HEK293 (cell line): ENCODE measurements at regions of chr17 and their contacts with region 1.

Region 1: DNA sequence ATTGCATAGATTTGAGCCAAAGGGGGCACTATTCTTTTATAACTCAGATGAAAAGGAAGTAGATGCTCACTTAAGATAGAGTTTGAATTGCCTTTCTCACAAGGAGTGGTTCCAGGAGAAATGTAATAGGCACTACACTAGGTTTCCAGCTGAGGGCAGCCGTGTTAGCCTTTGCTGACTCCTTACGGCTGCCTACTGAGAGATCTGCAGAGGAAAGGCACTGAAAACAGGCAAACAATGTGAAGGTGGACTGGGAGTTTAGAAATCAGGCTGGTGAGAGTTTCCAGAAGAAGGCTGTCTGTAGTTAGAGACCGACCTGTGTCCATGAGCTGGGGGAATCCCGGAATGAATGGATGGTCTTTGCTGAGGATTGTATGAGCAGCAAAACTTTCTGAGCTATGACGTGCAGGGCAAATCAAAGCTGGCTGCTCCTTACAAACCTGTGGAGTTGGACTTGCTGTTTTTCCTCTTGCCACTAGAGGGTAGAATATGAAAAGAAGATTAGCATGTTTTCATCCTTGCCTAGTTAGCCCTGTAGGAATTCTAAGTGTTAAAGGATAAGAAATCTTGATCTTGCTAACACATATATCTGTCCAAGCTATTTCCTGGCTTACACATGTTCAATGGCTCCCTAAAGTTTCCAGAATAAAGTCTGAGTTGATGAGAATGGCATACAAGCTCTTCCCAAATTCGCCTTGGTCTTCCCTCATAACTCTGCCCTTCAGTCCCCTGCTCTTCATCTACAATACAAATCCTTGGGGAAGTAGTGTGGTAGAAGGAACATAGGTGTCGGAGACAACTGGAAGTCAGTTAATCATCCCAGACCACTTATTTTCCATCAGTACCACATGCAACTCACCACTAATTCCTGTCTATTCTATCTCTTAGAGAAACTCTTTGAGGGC is 20.1 kb upstream of the TAOK1 start:
- H3K4me3 ChIP-seq: peak overlapping the region; percentile 21
- H3K27ac ChIP-seq: 0 out of 2 replicates have a peak overlapping the region, but pooled peaks have one; percentile 4
- H3K4me1 ChIP-seq: no peaks in the 10 kb centered on the region
- CTCF ChIP-seq: peak; percentile 75; the same call in 1 of the 2 replicates

Region 2: GRCh38 chr17:29293890-29294579 is 76.0 kb before region 1 on chr17 and contains the start of gene NUFIP2:
- CTCF ChIA-PET with region 1: interaction called, 11 read pairs
- POLR2A ChIA-PET with region 1: interaction called, 17 read pairs
- H3K4me3 ChIP-seq: peak within 1 kb of the TSS; percentile 86
- H3K27ac ChIP-seq: peak within 1 kb of the TSS; percentile 99
- H3K4me1 ChIP-seq: peaks cover 11% of the 10 kb centered on the region
- CTCF ChIP-seq: no peak; the same call in 1 of the 2 replicates

Region 3: GRCh38 chr17:29384900-29385299 is 14.8 kb after region 1 on chr17:
- CTCF ChIA-PET with region 1: interaction called, 48 read pairs
- POLR2A ChIA-PET with region 1: interaction called, 9 read pairs
- H3K4me3 ChIP-seq: no peak overlapping the region
- H3K27ac ChIP-seq: no peak overlapping the region
- H3K4me1 ChIP-seq: no peaks in the 10 kb centered on the region
- CTCF ChIP-seq: no peak

Region 4: GRCh38 chr17:29524460-29525091 is 154.5 kb after region 1 on chr17:
- CTCF ChIA-PET with region 1: interaction called, 14 read pairs
- POLR2A ChIA-PET with region 1: no interaction called
- H3K4me3 ChIP-seq: no peak overlapping the region
- H3K27ac ChIP-seq: no peak overlapping the region
- H3K4me1 ChIP-seq: 0 out of 2 replicates have a peak, but pooled peaks cover 2% of the 10 kb centered on the region
- CTCF ChIP-seq: no peak

Region 5: DNA sequence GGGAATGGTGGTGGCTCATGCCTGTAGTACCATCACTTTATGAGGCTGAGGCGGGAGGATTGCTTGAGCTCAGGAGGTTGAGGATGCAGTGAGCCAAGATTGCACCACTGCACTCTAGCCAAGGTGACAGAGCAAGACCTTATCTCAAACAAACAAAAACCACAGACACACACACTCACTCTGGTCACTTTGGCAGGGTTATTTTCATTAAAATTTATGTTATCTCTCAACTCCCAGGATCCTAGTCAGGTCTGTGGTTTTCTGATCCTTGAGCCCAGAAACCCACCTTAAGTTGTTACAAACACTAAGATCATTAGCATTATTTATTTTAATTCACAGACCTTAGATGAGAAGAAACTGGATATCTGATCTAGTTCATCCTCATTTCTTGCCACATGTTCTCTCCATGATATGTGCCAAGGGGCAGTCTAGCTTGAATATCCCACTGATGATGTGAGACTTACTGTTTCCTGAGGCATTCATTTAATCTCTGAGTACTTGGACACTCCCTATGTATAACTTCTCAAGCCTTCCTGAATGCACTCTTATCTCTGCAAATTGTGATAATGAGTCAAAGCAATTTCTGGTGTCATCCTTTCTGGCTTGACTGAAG is 187.1 kb after region 1 on chr17:
- CTCF ChIA-PET with region 1: interaction called, 13 read pairs
- POLR2A ChIA-PET with region 1: no interaction called
- H3K4me3 ChIP-seq: no peak overlapping the region
- H3K27ac ChIP-seq: no peak overlapping the region
- H3K4me1 ChIP-seq: no peaks in the 10 kb centered on the region
- CTCF ChIP-seq: no peak

Region 6: DNA sequence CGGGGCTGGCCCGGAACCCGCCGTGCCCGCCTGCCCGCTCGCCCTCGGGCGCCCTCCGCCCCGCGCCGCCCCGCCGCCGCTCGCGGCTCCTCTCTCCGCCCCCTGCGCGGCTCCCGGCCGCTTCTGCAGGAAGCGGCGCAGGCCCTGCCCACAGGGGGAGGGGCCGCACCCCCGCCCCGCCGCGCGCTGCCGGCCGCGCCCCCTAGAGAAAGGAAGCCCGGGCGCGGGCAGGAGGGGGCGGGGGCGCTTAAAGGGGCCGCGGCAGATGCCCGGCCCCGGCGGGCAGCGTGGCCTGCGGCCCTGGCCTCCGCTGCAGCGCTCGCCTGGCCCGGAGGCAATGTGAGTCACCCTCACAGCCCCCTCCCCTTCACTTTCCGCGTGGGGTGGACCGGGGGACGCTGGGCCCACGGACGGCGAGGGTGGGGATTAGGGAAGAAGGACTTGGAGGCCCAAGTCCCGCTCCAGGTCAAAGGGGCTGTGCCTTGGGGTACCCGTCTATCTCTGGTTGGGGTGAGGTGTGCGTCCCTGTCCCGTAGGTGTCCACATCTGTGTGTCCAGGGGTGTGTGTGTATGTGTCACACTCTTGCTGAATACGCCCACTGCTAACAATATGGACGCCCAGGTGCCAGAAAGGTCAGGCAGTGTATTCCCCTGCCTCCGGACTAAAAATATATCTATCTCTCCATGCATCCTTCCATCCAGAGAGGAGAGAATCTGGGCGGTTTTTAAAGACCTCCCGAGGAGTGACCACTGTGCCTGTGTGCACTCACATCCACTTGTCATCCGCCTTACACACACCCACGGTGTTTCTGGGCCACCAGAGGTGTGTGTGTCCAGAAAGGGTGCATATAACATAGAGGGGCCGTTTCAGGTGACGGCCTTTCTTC is 219.7 kb after region 1 on chr17 and contains the start of gene GIT1:
- CTCF ChIA-PET with region 1: interaction called, 57 read pairs
- POLR2A ChIA-PET with region 1: interaction called, 6 read pairs
- H3K4me3 ChIP-seq: peak within 1 kb of the TSS; percentile 86
- H3K27ac ChIP-seq: peak within 1 kb of the TSS; percentile 82
- H3K4me1 ChIP-seq: peaks cover 26% of the 10 kb centered on the region
- CTCF ChIP-seq: no peak